Activated T-helper 1 cell treated with anti-CD3 and anti-CD28 coated beads, Interleukin-12 subunit alpha, Interleukin-12 subunit beta, Interleukin-2, Interleukin-4 antibody, amounts not matched to agents 30 ng/mL and 10 ng/mL and 1 ng/mL, durations not matched to agents 14 hours and 24 hours and 36 hours (primary cell): ENCODE measurements at regions of chr1 and their contacts with region 1.

Region 1: GRCh38 chr1:9428601-9429341 is 110.5 kb upstream of the SLC25A33 start:
- DNase-seq: peak; percentile 100
- H3K4me3 Mint-ChIP-seq: peak overlapping the region; percentile 89
- H3K27ac Mint-ChIP-seq: peak overlapping the region; percentile 94
- H3K4me1 Mint-ChIP-seq: peaks cover 46% of the 10 kb centered on the region
- H3K27me3 Mint-ChIP-seq: peaks cover 11% of the 10 kb centered on the region

Region 2: DNA sequence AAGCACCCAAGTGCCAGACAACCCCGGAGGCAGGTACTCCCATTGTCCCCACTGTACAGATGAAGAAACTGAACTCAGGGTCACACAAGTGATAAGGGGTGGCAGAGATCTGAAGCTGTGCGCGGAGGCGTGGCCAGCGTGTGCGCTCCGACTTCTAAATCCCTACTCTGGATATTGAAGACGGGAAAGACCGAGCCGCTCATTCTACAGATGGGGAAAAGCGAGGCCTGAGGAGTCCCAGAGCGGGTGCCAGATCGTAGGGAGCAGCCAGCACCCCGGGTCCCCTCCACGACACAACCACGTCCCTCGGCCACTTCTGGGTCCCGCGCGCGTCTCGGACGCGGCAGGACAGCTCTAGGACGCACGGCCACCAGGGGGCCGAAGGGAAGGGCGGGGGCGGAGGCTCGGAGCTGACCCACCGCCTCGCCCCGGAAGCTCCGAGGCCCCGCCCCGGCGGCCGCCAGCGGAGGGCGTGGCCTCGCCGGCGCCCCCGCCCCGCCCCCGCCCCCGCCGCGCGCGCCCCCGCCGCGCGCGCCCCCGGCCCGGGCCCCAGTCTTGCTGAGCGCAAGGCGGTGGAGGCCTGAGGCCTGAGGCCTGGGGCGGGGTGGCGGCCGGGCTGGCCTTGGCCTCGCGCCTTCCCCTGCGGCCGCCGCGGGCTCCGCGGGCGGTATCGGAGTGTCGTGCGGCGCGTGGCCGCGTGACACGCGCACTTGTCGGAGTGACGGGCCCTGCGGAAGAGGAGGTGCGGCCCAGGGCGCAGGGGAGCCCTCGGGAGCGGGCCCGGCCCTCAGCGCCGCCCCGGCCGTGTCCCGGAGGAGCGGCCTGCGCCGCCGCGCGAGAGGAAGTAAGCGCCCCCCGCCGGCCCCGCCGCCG is 194.3 kb before region 1 on chr1 and contains the start of gene H6PD:
- intact Hi-C with region 1: loop called (anchors 1 kb)
- DNase-seq: peak; percentile 82
- H3K4me3 Mint-ChIP-seq: peak within 1 kb of the TSS; percentile 94
- H3K27ac Mint-ChIP-seq: peak within 1 kb of the TSS; percentile 98
- H3K4me1 Mint-ChIP-seq: peaks cover 36% of the 10 kb centered on the region
- H3K27me3 Mint-ChIP-seq: peaks cover 3% of the 10 kb centered on the region
- total RNA-seq, gene H6PD: 15.7 TPM in 2 replicates

Region 3: DNA sequence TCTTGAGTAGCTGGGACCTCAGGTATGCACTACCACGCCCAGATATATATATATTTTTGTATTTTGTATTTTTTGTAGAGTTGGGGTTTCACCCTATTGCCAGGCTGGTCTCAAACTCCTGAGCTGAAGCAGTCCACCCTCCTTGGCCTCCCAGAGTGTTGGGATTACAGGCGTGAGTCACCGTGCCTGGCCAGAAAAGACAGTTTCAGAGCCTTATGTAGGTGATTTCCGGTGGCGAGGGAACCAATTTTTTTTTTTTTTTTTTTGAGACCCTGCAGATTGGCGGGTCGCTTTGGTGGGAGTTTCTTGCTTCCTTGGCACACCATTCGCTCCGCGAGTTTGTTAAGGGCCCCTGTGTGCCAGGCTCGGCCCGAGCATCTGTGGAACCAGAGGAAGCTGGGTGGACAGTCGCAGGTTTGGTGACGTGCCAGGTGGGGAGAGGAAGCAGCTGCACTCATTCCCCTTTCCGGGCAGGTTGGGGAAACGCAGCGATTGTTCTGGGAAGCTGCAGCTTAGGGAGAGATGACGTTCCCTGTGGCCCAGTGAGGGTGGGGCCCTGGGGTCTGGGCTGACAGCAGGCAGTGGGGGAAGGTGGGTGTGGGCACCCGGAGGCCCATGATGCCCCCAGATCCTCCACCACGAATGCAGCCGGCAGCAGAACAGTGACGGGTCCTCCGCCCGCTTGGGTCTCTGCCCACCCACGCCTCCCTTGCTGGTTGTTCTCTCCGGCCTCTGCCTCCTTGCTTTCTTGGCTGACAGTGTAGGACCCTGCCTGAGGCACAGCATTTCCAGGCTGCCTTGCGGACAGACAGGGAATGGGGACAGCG is 111.0 kb before region 1 on chr1:
- intact Hi-C with region 1: loop called (anchors 1 kb)
- DNase-seq: no peak
- H3K4me3 Mint-ChIP-seq: peak overlapping the region; percentile 66
- H3K27ac Mint-ChIP-seq: peak overlapping the region; percentile 79
- H3K4me1 Mint-ChIP-seq: peaks cover 63% of the 10 kb centered on the region
- H3K27me3 Mint-ChIP-seq: no peaks in the 10 kb centered on the region

Region 4: GRCh38 chr1:9539165-9539828 is 110.5 kb after region 1 on chr1 and contains the start of gene SLC25A33:
- intact Hi-C with region 1: loop called (anchors 1 kb)
- DNase-seq: peak; percentile 98
- H3K4me3 Mint-ChIP-seq: peak within 1 kb of the TSS; percentile 94
- H3K27ac Mint-ChIP-seq: peak within 1 kb of the TSS; percentile 88
- H3K4me1 Mint-ChIP-seq: peaks cover 37% of the 10 kb centered on the region
- H3K27me3 Mint-ChIP-seq: no peaks in the 10 kb centered on the region
- total RNA-seq, gene SLC25A33: 12.5 and 13.5 TPM in 2 replicates

Region 5: GRCh38 chr1:9573723-9574122 is 145.0 kb after region 1 on chr1:
- intact Hi-C with region 1: no loop called
- DNase-seq: no peak
- H3K4me3 Mint-ChIP-seq: no peak overlapping the region
- H3K27ac Mint-ChIP-seq: no peak overlapping the region
- H3K4me1 Mint-ChIP-seq: no peaks in the 10 kb centered on the region
- H3K27me3 Mint-ChIP-seq: no peaks in the 10 kb centered on the region

Region 6: DNA sequence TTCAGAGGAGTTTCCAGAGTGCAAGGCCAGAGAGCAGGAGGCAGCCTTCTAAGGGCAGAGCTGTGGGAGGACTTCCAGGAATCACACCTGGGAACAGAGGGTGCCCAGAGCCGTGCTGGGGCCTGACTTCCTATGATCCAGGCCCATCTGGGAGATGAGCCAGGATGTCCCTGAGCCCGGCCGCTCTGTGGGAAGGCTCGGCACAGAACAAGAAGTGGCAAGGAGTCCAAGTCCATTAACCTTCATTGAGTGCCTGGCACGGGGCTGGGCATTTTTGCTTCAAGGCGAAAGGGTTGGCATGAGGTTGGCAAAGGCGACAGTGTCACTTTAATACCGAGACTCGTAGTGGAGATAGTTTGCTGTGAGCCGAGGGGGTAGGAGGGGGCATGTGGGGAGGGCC is 178.2 kb after region 1 on chr1:
- intact Hi-C with region 1: no loop called
- DNase-seq: no peak
- H3K4me3 Mint-ChIP-seq: no peak overlapping the region
- H3K27ac Mint-ChIP-seq: no peak overlapping the region
- H3K4me1 Mint-ChIP-seq: no peaks in the 10 kb centered on the region
- H3K27me3 Mint-ChIP-seq: no peaks in the 10 kb centered on the region

Region 7: GRCh38 chr1:9823943-9824701 is 395.4 kb after region 1 on chr1 and contains the start of gene CLSTN1:
- intact Hi-C with region 1: loop called (anchors 5 kb)
- DNase-seq: peak; percentile 83
- H3K4me3 Mint-ChIP-seq: peak within 1 kb of the TSS; percentile 97
- H3K27ac Mint-ChIP-seq: peak within 1 kb of the TSS; percentile 84
- H3K4me1 Mint-ChIP-seq: peaks cover 40% of the 10 kb centered on the region
- H3K27me3 Mint-ChIP-seq: peaks cover 6% of the 10 kb centered on the region
- total RNA-seq, gene CLSTN1: 48.0 and 48.6 TPM in 2 replicates